Mammary epithelial cell (primary cell): ENCODE measurements at regions of chr19 and their contacts with region 1.

Region 1: DNA sequence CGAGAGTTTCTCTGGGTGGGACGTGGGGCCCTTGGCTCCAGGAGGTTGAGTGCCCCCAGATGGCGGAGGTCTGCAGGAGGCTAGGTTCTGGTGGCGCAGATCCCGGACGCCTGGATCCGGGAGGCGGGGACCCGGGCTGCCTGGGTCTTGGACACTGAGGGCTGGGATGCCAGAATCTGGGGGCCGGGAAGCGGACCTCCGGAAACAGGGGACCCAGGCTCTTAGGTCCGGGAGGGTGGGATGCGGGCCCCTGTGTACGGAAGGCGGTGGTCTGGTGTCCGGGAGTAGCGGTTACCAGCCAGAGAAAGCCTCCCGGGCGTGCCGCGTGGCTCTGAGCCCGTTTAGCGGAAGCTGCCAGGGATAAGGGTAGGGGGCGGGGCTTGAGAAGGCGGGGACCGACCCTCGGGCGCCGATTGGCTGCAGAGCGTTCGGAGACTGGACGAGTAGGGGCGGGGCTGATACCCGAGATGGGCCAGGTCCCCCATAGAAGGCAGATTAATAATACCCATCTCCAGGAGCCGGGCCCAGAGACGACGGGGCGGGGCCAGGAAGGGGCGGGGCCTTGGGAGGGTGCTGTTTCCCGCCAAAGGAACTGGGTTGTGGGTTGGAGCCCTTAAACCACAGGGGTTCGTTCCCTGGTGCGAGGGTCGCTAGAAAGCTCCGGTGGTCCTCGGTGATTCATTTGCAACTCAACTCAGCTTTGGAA is at the start of gene SLC1A5:
- DNase-seq: peak; percentile 94
- H3K4me3 ChIP-seq: peak within 1 kb of the TSS; percentile 85 to 89 (median 87)
- H3K27ac ChIP-seq: peak within 1 kb of the TSS; percentile 81
- H3K4me1 ChIP-seq: peaks cover 36% of the 10 kb centered on the region
- H3K27me3 ChIP-seq: no peaks in the 10 kb centered on the region
- CTCF ChIP-seq: no peak
- total RNA-seq, gene SLC1A5: 328 to 370 TPM

Region 2: DNA sequence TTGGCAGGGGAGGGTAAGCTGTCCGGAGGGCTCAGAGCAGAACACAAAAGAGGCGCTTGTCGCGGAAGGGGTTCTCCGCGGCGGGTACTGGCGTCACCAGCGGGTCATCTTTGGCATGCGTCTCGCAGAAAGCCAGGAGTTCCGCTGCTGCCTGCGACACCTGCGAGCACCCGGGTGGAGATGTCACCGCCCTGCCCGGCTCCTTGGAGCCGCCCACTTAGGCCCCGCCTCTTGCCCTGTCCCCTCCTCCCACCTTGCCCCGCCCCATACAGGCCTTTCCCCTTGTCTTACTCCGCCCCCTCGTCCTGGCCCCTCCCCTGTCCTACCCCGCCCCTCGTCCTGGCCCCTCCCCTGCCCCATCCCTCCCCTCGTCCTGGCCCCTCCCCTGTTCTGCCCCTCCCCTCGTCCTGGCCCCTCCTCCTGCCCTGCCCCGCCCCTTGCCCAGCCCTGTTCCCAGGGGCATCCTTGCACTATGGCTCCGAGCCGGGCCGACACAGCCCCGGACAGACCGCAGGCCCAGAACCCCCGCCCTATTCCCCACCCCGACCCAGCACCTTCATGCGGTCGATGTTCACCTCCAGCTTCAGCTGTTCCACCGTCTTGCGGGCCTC is 154.3 kb before region 1 on chr19:
- CTCF ChIA-PET with region 1: no interaction called
- dilution Hi-C with region 1: no loop called
- in situ Hi-C with region 1: no loop called
- intact Hi-C with region 1: no loop called
- DNase-seq: peak; percentile 85
- H3K4me3 ChIP-seq: peak overlapping the region; percentile 29 to 51 (median 39)
- H3K27ac ChIP-seq: no peak overlapping the region
- H3K4me1 ChIP-seq: peaks cover 31% of the 10 kb centered on the region
- H3K27me3 ChIP-seq: peaks cover 3% of the 10 kb centered on the region
- CTCF ChIP-seq: no peak

Region 3: DNA sequence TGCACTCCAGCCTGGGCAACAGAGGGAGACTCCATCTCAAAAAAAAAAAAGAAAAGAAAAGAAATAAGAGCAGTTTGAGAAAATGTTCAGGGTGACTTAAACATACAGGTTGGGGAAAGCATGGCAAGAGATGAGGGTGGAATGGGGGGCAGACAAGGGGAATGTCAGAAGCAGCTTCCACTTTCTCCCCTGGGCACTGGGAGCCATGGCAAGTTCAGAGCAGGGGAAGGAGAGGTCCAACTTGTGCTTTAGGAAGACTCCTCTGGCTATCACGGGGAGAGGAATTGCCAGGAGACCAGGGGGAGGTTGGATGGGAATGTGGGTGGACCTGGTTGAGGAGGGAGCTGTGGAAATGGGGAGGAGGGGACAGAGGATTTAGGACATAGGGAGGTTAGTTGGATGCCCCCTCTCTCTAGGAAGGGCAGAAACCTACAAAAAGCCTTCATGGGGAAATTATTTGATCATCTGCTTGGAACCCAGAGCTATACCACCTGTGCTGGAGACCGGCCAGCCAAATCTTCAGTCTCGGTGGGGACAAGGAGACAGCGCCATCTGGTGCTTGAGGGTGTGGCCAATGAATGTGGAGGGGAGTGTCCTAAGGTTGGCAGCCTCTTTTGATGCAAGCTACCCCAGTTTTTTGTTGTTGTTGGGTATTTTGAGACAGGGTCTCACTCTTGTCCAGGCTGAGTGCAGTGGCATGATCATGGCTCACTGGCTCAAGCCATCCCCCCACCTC is 34.8 kb before region 1 on chr19:
- CTCF ChIA-PET with region 1: no interaction called
- dilution Hi-C with region 1: no loop called
- in situ Hi-C with region 1: no loop called
- intact Hi-C with region 1: loop called (anchors 5 kb)
- DNase-seq: peak; percentile 29
- H3K4me3 ChIP-seq: no peak overlapping the region
- H3K27ac ChIP-seq: no peak overlapping the region
- H3K4me1 ChIP-seq: peaks cover 3% of the 10 kb centered on the region
- H3K27me3 ChIP-seq: no peaks in the 10 kb centered on the region
- CTCF ChIP-seq: peak; percentile 51 to 55

Region 4: DNA sequence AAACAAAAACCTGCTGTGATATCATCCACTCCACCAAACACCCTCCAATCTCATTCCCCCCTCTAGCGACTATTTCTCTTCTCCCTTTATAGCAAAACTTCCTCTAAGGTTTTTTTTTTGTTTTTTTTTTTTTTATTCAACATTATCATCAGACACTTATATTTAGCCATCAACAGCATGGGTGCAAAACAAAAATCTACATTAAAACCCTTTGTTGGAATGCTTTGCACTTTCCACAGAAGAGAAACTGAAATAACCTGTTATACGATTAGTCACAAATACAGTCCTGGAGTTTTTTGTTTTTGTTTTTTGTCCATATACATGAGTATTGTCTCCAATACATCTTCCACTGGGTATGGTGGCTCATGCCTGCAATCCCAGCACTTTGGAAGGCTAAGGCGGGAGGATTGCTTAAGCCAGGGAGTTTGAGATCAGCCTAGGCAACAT is 37.1 kb after region 1 on chr19:
- CTCF ChIA-PET with region 1: interaction called, 6 read pairs
- dilution Hi-C with region 1: no loop called
- in situ Hi-C with region 1: no loop called
- intact Hi-C with region 1: loop called (anchors 1 kb)
- DNase-seq: peak; percentile 37
- H3K4me3 ChIP-seq: no peak overlapping the region
- H3K27ac ChIP-seq: no peak overlapping the region
- H3K4me1 ChIP-seq: peaks cover 11% of the 10 kb centered on the region
- H3K27me3 ChIP-seq: no peaks in the 10 kb centered on the region
- CTCF ChIP-seq: no peak

Region 5: DNA sequence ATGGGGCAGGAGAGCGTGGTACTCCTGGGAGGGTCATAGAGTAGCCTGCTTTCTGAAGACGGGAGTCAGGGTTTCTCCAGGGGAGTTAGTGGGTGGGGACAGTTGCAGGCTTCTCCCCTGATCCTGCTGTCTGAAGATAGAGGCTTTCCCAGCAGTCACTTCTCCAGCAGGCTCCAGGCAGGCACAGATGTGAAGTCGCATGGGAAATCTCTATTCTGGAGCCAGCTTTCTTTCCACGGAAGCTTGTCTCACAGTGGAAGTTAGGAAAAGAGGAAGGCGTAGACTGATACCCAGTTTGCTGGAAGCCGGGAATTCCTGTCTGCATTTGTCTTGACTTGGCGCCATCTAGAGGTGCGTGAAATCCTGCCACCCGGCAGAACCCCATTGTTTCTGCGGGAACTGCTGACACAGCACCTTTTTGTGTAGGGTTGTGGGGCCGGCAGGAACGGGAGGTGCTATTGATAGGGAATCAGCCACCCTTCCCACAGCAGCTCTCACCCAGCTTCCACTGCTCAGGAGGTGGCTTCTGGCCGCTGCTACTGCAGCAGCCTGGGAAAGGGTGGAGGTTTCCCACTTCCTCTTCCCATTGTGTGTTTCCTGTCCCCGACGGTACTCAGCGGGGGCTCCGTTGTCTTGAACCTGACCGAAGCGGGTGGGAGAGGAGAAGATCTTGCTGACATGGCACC is 202.7 kb after region 1 on chr19:
- CTCF ChIA-PET with region 1: no interaction called
- dilution Hi-C with region 1: loop called (anchors 10 kb)
- in situ Hi-C with region 1: no loop called
- intact Hi-C with region 1: no loop called
- DNase-seq: peak; percentile 60
- H3K4me3 ChIP-seq: no peak overlapping the region
- H3K27ac ChIP-seq: no peak overlapping the region
- H3K4me1 ChIP-seq: no peaks in the 10 kb centered on the region
- H3K27me3 ChIP-seq: no peaks in the 10 kb centered on the region
- CTCF ChIP-seq: peak; percentile 77 to 89

Region 6: DNA sequence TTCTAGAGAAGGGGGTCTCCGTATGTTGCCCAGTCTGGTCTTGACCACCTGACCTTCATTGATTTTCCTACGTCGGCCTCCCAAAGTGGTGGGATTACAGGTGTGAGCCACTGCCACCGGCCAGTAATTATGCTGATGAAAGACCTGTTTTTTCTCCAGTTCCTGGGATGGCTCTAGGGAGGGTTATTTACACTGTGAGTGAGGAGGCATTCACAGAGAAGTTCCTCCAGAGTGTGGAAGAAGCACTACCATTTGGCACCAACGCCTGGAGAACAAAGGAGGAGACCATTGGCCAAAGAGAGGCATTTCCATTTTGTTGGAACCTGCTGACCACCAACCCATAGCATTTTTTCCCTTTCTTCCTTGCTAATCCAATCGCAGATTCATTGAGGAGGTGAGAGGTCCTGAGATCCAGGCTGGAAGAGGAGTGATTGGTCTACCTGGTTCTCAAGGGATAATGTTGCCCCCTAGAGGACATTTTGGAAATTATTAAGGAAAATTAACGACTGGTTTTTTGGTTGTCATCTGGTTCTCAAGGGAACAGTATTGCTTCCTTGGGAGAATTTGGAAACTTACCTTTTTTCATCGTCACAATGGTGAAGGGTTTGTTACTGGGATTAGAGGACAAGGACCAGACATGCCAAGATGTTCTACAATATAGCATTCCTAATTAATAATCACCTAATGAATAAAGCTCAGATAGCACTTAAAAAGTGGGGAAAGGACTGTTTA is 336.7 kb after region 1 on chr19:
- CTCF ChIA-PET with region 1: no interaction called
- dilution Hi-C with region 1: no loop called
- in situ Hi-C with region 1: no loop called
- intact Hi-C with region 1: loop called (anchors 5 kb)
- DNase-seq: peak; percentile 55
- H3K4me3 ChIP-seq: no peak overlapping the region
- H3K27ac ChIP-seq: no peak overlapping the region
- H3K4me1 ChIP-seq: peaks cover 12% of the 10 kb centered on the region
- H3K27me3 ChIP-seq: no peaks in the 10 kb centered on the region
- CTCF ChIP-seq: peak; percentile 52 to 62